ENCODE measurements at regions of chr11 and their contacts with region 1.

Region 1: DNA sequence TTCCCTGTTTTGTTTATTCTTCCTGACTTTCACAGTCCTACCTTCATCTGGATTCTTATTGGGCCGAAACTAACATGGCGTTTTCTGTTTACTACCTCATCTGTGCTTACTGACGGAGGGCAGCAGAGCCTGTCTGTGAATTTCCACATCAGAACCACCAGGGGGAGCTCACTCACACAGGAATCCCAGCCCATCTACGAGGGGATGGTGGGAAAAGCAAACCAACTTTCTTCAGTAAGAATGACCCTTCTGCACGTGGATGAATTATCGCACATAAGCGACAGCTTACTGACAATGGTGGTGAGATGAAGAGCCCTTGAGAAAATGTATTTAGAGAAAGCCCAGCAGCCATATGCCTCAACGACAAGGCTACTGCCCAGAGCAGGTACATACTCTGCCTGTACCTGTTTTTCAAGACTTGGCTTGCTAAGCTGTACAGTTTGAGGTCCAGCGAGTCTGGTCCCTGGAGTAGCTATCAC is 42.5 kb downstream of the LARGE2 start:
- DNase-seq: peak; percentile 63 to 65 (median 65)
- H3K4me3 ChIP-seq: no peak overlapping the region
- H3K4me3 Mint-ChIP-seq: no peak overlapping the region
- H3K27ac ChIP-seq: no peak overlapping the region
- H3K27ac Mint-ChIP-seq: no peak overlapping the region
- H3K4me1 ChIP-seq: no peaks in the 10 kb centered on the region
- H3K4me1 Mint-ChIP-seq: peaks cover 0 to 1% (median 0%) of the 10 kb centered on the region in 4 donors
- H3K27me3 ChIP-seq: no peaks in the 10 kb centered on the region
- H3K27me3 Mint-ChIP-seq: no peaks in the 10 kb centered on the region

Region 2: GRCh38 chr11:45704635-45705034 is 260.3 kb before region 1 on chr11:
- CTCF ChIA-PET with region 1: no interaction called
- POLR2A ChIA-PET with region 1: no interaction called
- intact Hi-C with region 1: no loop called
- DNase-seq: no peak
- H3K4me3 ChIP-seq: no peak overlapping the region
- H3K4me3 Mint-ChIP-seq: no peak overlapping the region
- H3K27ac ChIP-seq: no peak overlapping the region
- H3K27ac Mint-ChIP-seq: no peak overlapping the region
- H3K4me1 ChIP-seq: no peaks in the 10 kb centered on the region
- H3K4me1 Mint-ChIP-seq: no peaks in the 10 kb centered on the region
- H3K27me3 ChIP-seq: peaks cover 5% of the 10 kb centered on the region
- H3K27me3 Mint-ChIP-seq: peaks cover 31 to 38% of the 10 kb centered on the region in 2 donors

Region 3: GRCh38 chr11:45930031-45930794 is 34.7 kb before region 1 on chr11:
- CTCF ChIA-PET with region 1: interaction called, 16 read pairs
- POLR2A ChIA-PET with region 1: interaction called, 3 read pairs
- intact Hi-C with region 1: no loop called
- DNase-seq: peak; percentile 50 to 72 (median 56)
- H3K4me3 ChIP-seq: peak overlapping the region in 1 of 2 donors; percentile 1
- H3K4me3 Mint-ChIP-seq: peak overlapping the region; percentile 59 to 88 (median 79)
- H3K27ac ChIP-seq: peak overlapping the region; percentile 41
- H3K27ac Mint-ChIP-seq: peak overlapping the region; percentile 78 to 98 (median 94)
- H3K4me1 ChIP-seq: peaks cover 42% of the 10 kb centered on the region
- H3K4me1 Mint-ChIP-seq: peaks cover 23 to 52% (median 38%) of the 10 kb centered on the region in 4 donors
- H3K27me3 ChIP-seq: no peaks in the 10 kb centered on the region
- H3K27me3 Mint-ChIP-seq: no peaks in the 10 kb centered on the region

Region 4: GRCh38 chr11:45949992-45950407 is 14.9 kb before region 1 on chr11:
- CTCF ChIA-PET with region 1: interaction called, 58 read pairs
- POLR2A ChIA-PET with region 1: no interaction called
- intact Hi-C with region 1: no loop called
- DNase-seq: no peak
- H3K4me3 ChIP-seq: no peak overlapping the region
- H3K4me3 Mint-ChIP-seq: no peak overlapping the region
- H3K27ac ChIP-seq: no peak overlapping the region
- H3K27ac Mint-ChIP-seq: no peak overlapping the region
- H3K4me1 ChIP-seq: no peaks in the 10 kb centered on the region
- H3K4me1 Mint-ChIP-seq: no peaks in the 10 kb centered on the region
- H3K27me3 ChIP-seq: no peaks in the 10 kb centered on the region
- H3K27me3 Mint-ChIP-seq: no peaks in the 10 kb centered on the region

Region 5: GRCh38 chr11:46001448-46001914 is 36.5 kb after region 1 on chr11:
- CTCF ChIA-PET with region 1: interaction called, 75 read pairs
- POLR2A ChIA-PET with region 1: interaction called, 4 read pairs
- intact Hi-C with region 1: loop called (anchors 1 kb)
- DNase-seq: no peak
- H3K4me3 ChIP-seq: no peak overlapping the region
- H3K4me3 Mint-ChIP-seq: no peak overlapping the region
- H3K27ac ChIP-seq: no peak overlapping the region
- H3K27ac Mint-ChIP-seq: no peak overlapping the region
- H3K4me1 ChIP-seq: no peaks in the 10 kb centered on the region
- H3K4me1 Mint-ChIP-seq: peaks cover 0 to 8% (median 6%) of the 10 kb centered on the region in 4 donors
- H3K27me3 ChIP-seq: no peaks in the 10 kb centered on the region
- H3K27me3 Mint-ChIP-seq: no peaks in the 10 kb centered on the region

Region 6: DNA sequence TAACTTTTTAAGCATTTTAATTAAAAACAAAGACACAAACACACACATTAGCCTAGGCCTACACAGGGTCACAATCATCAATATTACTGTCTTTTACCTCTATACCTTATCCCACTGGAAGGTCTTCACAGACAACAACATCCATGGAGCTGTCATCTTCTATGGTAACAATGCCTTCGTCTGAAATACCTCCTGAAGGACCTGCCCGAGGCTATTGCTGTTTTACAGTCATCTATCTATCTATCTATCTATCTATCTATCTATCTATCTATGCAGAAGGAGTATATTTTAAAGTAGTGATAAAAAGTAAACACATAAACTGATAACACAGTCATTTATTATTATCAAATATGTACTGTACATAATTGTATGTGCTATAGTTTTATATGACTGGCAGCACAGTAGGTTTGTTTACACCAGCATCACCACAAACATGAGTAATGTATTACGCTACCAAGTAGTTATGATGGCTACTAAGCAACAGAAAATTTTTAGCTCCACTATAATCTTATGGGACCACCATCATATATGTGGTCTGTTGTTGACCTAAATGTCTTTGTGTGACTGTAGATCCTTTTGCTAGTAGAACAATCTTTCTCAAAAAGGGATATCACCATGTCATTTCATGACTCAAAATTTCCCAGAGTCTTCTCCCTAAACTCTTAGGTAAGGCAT is 50.9 kb after region 1 on chr11:
- CTCF ChIA-PET with region 1: interaction called, 14 read pairs
- POLR2A ChIA-PET with region 1: no interaction called
- intact Hi-C with region 1: no loop called
- DNase-seq: no peak
- H3K4me3 ChIP-seq: no peak overlapping the region
- H3K4me3 Mint-ChIP-seq: no peak overlapping the region
- H3K27ac ChIP-seq: no peak overlapping the region
- H3K27ac Mint-ChIP-seq: peak overlapping the region in 2 of 7 donors; percentile 0 to 38
- H3K4me1 ChIP-seq: no peaks in the 10 kb centered on the region
- H3K4me1 Mint-ChIP-seq: peaks cover 0 to 15% (median 6%) of the 10 kb centered on the region in 4 donors
- H3K27me3 ChIP-seq: no peaks in the 10 kb centered on the region
- H3K27me3 Mint-ChIP-seq: no peaks in the 10 kb centered on the region

Region 7: DNA sequence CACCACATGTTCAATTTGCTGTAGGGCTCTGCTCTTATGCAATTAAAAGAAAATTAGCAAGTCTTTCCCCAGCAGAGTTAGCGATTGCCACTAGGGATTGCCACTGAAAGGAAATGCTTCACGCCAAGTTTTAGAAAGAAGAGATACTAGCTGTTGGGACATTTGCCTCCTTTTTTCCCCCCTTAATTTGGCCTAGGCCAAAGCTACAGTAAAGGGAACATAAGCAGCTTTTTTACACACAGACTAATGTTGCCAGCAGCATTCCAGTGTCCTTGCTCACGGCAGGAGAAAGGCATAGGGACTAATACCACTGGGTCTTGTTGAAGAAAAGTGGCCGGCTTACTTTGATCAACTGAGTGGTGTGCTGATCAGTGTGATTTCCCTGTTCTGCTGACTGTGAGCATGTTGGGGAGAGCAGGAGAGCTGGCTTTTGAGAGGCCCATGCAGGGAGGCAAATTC is 85.1 kb after region 1 on chr11:
- CTCF ChIA-PET with region 1: no interaction called
- POLR2A ChIA-PET with region 1: no interaction called
- intact Hi-C with region 1: no loop called
- DNase-seq: no peak
- H3K4me3 ChIP-seq: no peak overlapping the region
- H3K4me3 Mint-ChIP-seq: no peak overlapping the region
- H3K27ac ChIP-seq: no peak overlapping the region
- H3K27ac Mint-ChIP-seq: no peak overlapping the region
- H3K4me1 ChIP-seq: no peaks in the 10 kb centered on the region
- H3K4me1 Mint-ChIP-seq: peaks cover 4 to 15% (median 13%) of the 10 kb centered on the region in 4 donors
- H3K27me3 ChIP-seq: no peaks in the 10 kb centered on the region
- H3K27me3 Mint-ChIP-seq: no peaks in the 10 kb centered on the region

Region 8: GRCh38 chr11:46308631-46309419 is 343.9 kb after region 1 on chr11:
- CTCF ChIA-PET with region 1: interaction called, 22 read pairs
- POLR2A ChIA-PET with region 1: no interaction called
- intact Hi-C with region 1: loop called (anchors 1 kb)
- DNase-seq: peak; percentile 44 to 61 (median 53)
- H3K4me3 ChIP-seq: no peak overlapping the region
- H3K4me3 Mint-ChIP-seq: no peak overlapping the region
- H3K27ac ChIP-seq: no peak overlapping the region
- H3K27ac Mint-ChIP-seq: peak overlapping the region in 1 of 7 donors; percentile 69
- H3K4me1 ChIP-seq: peaks cover 6% of the 10 kb centered on the region
- H3K4me1 Mint-ChIP-seq: peaks cover 4 to 11% (median 6%) of the 10 kb centered on the region in 4 donors
- H3K27me3 ChIP-seq: no peaks in the 10 kb centered on the region
- H3K27me3 Mint-ChIP-seq: no peaks in the 10 kb centered on the region